Caco-2 (cell line): ENCODE measurements at regions of chr6 and their contacts with region 1.

Region 1: GRCh38 chr6:135423649-135424128 is 73.9 kb downstream of the AHI1 start:
- DNase-seq: peak in 1 of 2 experiments; percentile 37
- H3K4me3 ChIP-seq: no peak overlapping the region
- H3K4me3 Mint-ChIP-seq: no peak overlapping the region
- H3K27ac Mint-ChIP-seq: no peak overlapping the region
- H3K4me1 ChIP-seq: 0 out of 2 replicates have a peak, but pooled peaks cover 9% of the 10 kb centered on the region
- H3K4me1 Mint-ChIP-seq: peaks cover 8% of the 10 kb centered on the region
- H3K27me3 ChIP-seq: no peaks in the 10 kb centered on the region
- H3K27me3 Mint-ChIP-seq: no peaks in the 10 kb centered on the region
- CTCF ChIP-seq: peak; percentile 58 to 60

Region 2: DNA sequence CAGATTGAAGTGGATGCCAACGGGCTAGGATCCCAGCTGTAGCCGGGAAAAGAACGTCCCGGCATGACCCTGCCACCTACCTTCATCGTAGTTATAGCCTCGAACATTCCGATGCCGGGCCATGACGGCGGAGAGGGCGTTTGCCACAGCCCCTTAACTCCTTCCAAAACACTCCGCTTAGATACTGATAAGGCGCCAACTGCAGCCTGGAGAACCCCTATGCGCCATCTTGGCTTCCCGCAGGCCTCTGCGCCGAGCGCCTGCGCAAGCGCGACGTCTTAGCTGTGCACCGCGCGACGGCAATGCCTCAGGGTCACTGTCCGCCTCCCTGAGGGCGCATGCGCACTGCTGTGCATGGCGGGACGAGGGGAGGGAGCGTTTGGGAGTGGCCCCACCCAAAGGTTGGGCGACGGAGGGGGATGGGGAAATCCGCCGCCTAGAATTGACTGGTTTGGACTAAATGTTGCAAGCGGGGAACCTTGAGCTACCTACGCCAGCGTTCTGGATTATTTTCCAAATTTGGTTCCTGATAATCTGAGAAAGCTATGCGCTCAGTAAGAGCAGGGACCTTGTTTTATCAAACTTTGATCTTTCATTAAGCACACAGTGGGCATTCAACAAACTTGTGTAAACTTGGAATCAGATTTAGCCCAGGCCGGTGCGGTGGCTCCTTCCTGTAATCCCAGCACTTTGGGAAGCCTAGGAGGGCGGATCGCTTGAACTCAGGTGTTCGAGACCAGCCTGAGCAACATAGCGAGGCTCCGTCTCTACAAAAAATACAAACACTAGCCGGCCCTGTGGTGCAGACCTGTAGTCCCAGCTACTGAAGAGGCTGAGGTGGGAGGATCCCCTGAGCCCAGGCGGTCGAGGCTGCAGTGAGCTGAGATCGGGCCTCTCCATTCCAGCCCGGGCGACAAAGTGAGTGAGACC is 368.9 kb before region 1 on chr6 and contains the start of gene HBS1L:
- CTCF ChIA-PET with region 1: no interaction called
- POLR2A ChIA-PET with region 1: no interaction called
- intact Hi-C with region 1: loop called (anchors 10 kb)
- DNase-seq: peak; percentile 97
- H3K4me3 ChIP-seq: peak within 1 kb of the TSS; percentile 82
- H3K4me3 Mint-ChIP-seq: peak within 1 kb of the TSS; percentile 90
- H3K27ac Mint-ChIP-seq: peak within 1 kb of the TSS; percentile 94
- H3K4me1 ChIP-seq: no peaks in the 10 kb centered on the region
- H3K4me1 Mint-ChIP-seq: peaks cover 20% of the 10 kb centered on the region
- H3K27me3 ChIP-seq: no peaks in the 10 kb centered on the region
- H3K27me3 Mint-ChIP-seq: no peaks in the 10 kb centered on the region
- CTCF ChIP-seq: no peak
- total RNA-seq, gene HBS1L: 79.2 and 81.2 TPM in 2 replicates

Region 3: GRCh38 chr6:135145063-135145800 is 278.5 kb before region 1 on chr6:
- CTCF ChIA-PET with region 1: no interaction called
- POLR2A ChIA-PET with region 1: no interaction called
- intact Hi-C with region 1: loop called (anchors 1 kb)
- DNase-seq: peak in 1 of 2 experiments; percentile 30
- H3K4me3 ChIP-seq: no peak overlapping the region
- H3K4me3 Mint-ChIP-seq: no peak overlapping the region
- H3K27ac Mint-ChIP-seq: no peak overlapping the region
- H3K4me1 ChIP-seq: no peaks in the 10 kb centered on the region
- H3K4me1 Mint-ChIP-seq: no peaks in the 10 kb centered on the region
- H3K27me3 ChIP-seq: no peaks in the 10 kb centered on the region
- H3K27me3 Mint-ChIP-seq: no peaks in the 10 kb centered on the region
- CTCF ChIP-seq: peak; percentile 48 to 57

Region 4: GRCh38 chr6:135267085-135267484 is 156.6 kb before region 1 on chr6:
- CTCF ChIA-PET with region 1: no interaction called
- POLR2A ChIA-PET with region 1: no interaction called
- intact Hi-C with region 1: loop called (anchors 5 kb)
- DNase-seq: peak; percentile 65 to 69
- H3K4me3 ChIP-seq: no peak overlapping the region
- H3K4me3 Mint-ChIP-seq: no peak overlapping the region
- H3K27ac Mint-ChIP-seq: peak overlapping the region; percentile 22
- H3K4me1 ChIP-seq: peaks cover 34% of the 10 kb centered on the region
- H3K4me1 Mint-ChIP-seq: peaks cover 26% of the 10 kb centered on the region
- H3K27me3 ChIP-seq: no peaks in the 10 kb centered on the region
- H3K27me3 Mint-ChIP-seq: no peaks in the 10 kb centered on the region
- CTCF ChIP-seq: no peak